ENCODE measurements at regions of chr7 and their contacts with region 1.

Region 1: GRCh38 chr7:129741743-129742213 is 130.3 kb downstream of the NRF1 start:
- DNase-seq: no peak

Region 2: DNA sequence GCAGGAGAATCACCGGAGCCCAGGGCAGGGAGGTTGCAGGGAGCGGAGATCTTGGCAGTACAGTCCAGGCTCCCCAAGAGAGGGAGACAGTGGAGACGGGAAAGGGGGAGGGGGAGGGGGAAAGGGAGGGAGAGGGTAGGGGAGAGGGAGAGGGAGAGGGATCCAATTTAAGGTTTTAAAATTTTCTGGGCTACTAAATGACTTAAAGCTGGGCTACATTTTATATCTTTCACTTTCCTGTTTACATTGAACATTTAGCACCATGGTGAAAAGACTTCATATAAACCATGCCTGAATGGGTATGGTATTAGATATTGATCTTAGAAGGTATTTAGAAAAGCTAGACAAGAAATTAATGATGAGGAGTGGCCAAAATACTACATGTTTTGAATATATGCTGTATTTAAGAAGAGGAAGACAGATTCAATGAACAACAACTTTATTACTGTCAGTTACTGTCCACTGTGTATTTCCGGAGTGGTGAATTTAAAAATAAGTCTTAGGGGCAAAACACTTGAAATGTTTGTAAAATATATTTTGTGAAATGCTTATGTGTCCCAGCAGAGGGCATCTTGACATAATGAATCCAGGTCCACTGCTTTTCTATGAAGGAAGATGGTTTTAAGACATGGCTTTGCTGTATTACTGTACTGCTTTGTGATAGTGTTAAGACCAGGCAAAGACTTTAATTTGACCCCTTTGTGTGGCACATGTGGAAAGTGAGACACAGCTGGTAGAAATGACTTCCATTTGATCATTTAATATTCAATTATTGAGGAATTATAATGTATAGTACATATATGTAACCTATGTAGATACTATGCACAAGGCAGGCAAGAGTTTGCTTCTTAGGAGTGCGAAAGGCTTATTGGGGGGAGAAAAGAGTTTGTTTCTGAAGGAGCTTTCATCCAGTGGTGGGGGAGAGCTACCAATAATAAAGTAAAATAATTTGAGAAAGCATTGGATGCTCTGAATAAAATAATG is 77.5 kb before region 1 on chr7:
- intact Hi-C with region 1: no loop called
- DNase-seq: no peak

Region 3: GRCh38 chr7:129773328-129773731 is 31.6 kb after region 1 on chr7:
- intact Hi-C with region 1: loop called in 1 of 2 experiments (anchors 1 kb)
- DNase-seq: no peak

Region 4: DNA sequence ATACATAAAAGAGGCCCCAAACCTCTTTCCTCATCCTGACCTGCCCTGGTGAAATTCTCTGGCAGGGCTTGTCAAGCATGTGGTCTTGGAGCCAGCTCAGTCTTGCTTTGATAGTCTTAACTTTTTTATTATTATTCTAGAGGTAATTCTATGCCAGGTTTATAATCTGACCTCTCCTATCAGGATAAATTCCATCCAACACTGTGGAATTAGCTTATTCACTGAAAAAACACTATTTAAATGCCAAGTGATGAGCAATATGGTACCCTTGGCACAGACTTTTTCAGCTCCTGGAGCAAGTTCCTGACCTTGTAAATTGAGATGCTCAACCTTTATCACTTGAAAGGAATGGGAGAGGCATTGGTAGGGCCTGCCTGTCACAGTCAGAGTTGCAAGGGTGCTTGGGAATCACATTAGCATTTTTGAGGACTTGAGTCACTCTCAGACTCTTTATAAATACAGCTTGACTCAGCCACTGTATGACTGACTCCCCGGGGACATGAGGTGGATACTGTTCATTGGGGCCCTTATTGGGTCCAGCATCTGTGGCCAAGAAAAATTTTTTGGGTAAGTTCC is 551.0 kb after region 1 on chr7 and contains the start of gene CPA4:
- intact Hi-C with region 1: no loop called
- DNase-seq: no peak
- total RNA-seq, gene CPA4: 0.37 to 0.62 TPM

Measured in posterior vena cava (tissue), 2 donors.